ENCODE measurements at regions of chr4 and their contacts with region 1.

Region 1: DNA sequence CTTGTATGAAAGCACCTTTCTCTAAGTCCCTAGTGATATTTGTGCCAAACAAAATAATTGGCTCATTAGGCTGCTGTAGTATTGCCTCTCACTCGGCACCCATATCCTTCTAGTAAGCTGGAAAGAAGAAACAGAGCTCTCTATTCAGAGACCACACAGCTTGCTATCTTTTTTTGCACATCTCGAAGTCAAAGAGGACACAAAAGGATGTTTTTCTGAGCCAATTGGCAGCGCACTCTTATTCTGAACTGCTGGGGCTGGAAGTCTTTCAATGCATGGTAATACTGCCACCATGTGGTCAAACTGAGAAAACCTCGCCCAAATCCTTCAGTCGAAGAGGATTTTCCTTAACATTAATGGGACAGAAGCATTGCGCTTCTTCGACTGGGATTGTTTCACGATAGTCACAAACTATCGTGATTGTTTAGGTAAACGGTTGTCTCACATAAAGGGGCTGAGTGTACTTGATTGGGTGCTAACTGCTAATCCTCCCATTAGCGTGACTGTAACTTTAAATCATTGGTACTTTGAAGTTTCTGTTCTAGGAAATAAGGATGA is 572.0 kb upstream of the LCORL start:
- DNase-seq: peak in 40 of 42 donors; percentile 25 to 91 (median 78)

Region 2: DNA sequence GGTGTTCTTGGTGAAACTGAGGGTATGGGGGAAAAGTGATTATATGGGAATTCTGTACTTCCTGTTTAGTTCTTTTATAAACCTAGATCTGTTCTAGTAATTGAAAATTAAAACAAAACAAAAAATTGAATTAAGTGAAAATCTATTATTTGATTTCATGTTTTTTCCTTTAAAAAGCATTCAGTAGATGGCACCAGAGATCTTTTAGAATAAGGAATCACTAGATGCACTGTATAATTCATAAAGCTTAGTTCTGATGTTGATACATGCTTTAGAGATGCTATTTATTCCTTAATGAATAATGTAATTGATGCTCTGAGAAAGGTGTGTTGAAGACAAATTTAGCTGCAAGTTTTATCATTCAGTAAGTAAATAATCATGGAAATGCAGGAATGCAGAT is 659.2 kb before region 1 on chr4:
- intact Hi-C with region 1: loop called (anchors 10 kb)
- DNase-seq: no peak

Measured in head of caudate nucleus (tissue), 42 donors.